ENCODE measurements at regions of chr12 and their contacts with region 1.

Region 1: GRCh38 chr12:95998611-95999286 is 2.6 kb upstream of the HAL start:
- DNase-seq: peak; percentile 70
- ATAC-seq: peak; percentile 98
- H3K4me3 Mint-ChIP-seq: no peak overlapping the region
- H3K27ac Mint-ChIP-seq: peak overlapping the region; percentile 10
- H3K4me1 Mint-ChIP-seq: peaks cover 11% of the 10 kb centered on the region
- H3K27me3 Mint-ChIP-seq: no peaks in the 10 kb centered on the region

Region 2: GRCh38 chr12:95623585-95624042 is 375.1 kb before region 1 on chr12:
- CTCF ChIA-PET with region 1: no interaction called
- POLR2A ChIA-PET with region 1: no interaction called
- intact Hi-C with region 1: loop called in 1 of 2 experiments (anchors 2 kb)
- DNase-seq: peak; percentile 59
- ATAC-seq: no peak
- H3K4me3 Mint-ChIP-seq: no peak overlapping the region
- H3K27ac Mint-ChIP-seq: no peak overlapping the region
- H3K4me1 Mint-ChIP-seq: no peaks in the 10 kb centered on the region
- H3K27me3 Mint-ChIP-seq: peaks cover 2% of the 10 kb centered on the region

Region 3: DNA sequence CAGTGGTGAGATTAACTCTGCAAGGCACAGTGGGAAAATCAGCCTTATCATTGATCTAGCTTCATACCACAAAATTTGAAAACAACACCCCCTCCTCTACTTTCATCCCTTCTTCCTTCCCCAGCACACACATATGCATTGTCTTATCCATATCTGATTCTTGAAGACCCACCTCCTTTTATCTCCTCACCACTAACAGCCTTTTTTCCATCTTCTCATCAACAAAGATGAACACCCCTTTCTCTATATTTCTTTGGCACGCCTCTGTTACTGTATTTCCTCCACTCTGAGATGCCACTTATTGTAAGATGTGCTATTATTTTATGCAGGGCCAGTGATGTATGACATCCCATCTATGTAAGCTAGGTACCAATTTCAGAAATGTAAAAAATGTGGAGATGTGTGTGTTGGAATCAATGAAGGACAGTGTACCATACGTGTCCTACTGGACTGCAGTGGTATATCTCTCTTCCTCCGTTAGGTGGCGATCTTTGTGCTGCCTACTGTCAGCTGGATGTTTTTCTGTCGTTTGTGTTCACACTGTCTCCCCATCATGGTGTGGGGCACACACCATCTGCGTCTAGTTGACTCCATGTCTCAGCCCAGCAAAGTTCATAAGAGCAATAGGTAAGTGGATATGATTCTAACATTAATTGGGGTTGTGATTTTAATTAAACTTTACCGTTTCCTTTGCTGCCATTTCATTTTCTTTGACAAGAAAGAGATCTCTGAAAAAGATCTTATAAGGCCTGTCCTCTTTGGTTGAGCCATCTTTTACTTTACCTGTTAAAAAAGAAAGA is 80.4 kb before region 1 on chr12:
- CTCF ChIA-PET with region 1: interaction called, 82 read pairs
- POLR2A ChIA-PET with region 1: no interaction called
- intact Hi-C with region 1: loop called (anchors 1 to 2 kb)
- DNase-seq: peak; percentile 60
- ATAC-seq: peak; percentile 97
- H3K4me3 Mint-ChIP-seq: no peak overlapping the region
- H3K27ac Mint-ChIP-seq: no peak overlapping the region
- H3K4me1 Mint-ChIP-seq: no peaks in the 10 kb centered on the region
- H3K27me3 Mint-ChIP-seq: no peaks in the 10 kb centered on the region

Region 4: GRCh38 chr12:95977764-95978305 is 20.9 kb before region 1 on chr12:
- CTCF ChIA-PET with region 1: interaction called, 10 read pairs
- POLR2A ChIA-PET with region 1: no interaction called
- intact Hi-C with region 1: no loop called
- DNase-seq: no peak
- ATAC-seq: no peak
- H3K4me3 Mint-ChIP-seq: no peak overlapping the region
- H3K27ac Mint-ChIP-seq: no peak overlapping the region
- H3K4me1 Mint-ChIP-seq: no peaks in the 10 kb centered on the region
- H3K27me3 Mint-ChIP-seq: no peaks in the 10 kb centered on the region

Region 5: DNA sequence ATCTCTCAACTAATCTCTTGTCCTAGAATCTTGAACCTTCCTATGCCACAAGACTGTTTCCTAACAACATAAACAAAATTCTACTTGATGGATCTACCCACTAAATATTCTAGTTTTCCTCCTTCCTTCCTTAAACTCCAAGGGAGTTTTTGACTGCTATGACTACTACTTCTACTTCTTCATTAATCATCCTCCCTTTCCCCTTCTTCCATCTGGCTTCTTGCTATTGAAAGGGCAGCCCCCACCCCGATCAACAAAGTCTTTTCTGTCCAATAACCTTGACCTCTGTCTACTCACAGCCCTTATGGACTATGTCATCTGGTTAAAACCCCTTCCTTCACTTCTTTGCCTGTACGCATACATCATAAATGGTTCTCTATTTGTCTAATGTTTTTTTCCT is 31.1 kb after region 1 on chr12:
- CTCF ChIA-PET with region 1: interaction called, 12 read pairs
- POLR2A ChIA-PET with region 1: no interaction called
- intact Hi-C with region 1: no loop called
- DNase-seq: no peak
- ATAC-seq: no peak
- H3K4me3 Mint-ChIP-seq: no peak overlapping the region
- H3K27ac Mint-ChIP-seq: no peak overlapping the region
- H3K4me1 Mint-ChIP-seq: peaks cover 29% of the 10 kb centered on the region
- H3K27me3 Mint-ChIP-seq: no peaks in the 10 kb centered on the region

Measured in activated CD4-positive, alpha-beta T cell treated with anti-CD3 and anti-CD28 coated beads for 36 hours (primary cell).